Activated T-helper 1 cell treated with anti-CD3 and anti-CD28 coated beads, Interleukin-12 subunit alpha, Interleukin-12 subunit beta, Interleukin-2, Interleukin-4 antibody, amounts not matched to agents 30 ng/mL and 10 ng/mL and 1 ng/mL, durations not matched to agents 14 hours and 24 hours and 36 hours (primary cell): ENCODE measurements at regions of chr11 and their contacts with region 1.

Region 1: GRCh38 chr11:118845369-118845768 is 38.3 kb upstream of the CXCR5 start:
- DNase-seq: no peak
- H3K4me3 Mint-ChIP-seq: no peak overlapping the region
- H3K27ac Mint-ChIP-seq: peak overlapping the region; percentile 80
- H3K4me1 Mint-ChIP-seq: peaks cover 27% of the 10 kb centered on the region
- H3K27me3 Mint-ChIP-seq: peaks cover 5% of the 10 kb centered on the region

Region 2: DNA sequence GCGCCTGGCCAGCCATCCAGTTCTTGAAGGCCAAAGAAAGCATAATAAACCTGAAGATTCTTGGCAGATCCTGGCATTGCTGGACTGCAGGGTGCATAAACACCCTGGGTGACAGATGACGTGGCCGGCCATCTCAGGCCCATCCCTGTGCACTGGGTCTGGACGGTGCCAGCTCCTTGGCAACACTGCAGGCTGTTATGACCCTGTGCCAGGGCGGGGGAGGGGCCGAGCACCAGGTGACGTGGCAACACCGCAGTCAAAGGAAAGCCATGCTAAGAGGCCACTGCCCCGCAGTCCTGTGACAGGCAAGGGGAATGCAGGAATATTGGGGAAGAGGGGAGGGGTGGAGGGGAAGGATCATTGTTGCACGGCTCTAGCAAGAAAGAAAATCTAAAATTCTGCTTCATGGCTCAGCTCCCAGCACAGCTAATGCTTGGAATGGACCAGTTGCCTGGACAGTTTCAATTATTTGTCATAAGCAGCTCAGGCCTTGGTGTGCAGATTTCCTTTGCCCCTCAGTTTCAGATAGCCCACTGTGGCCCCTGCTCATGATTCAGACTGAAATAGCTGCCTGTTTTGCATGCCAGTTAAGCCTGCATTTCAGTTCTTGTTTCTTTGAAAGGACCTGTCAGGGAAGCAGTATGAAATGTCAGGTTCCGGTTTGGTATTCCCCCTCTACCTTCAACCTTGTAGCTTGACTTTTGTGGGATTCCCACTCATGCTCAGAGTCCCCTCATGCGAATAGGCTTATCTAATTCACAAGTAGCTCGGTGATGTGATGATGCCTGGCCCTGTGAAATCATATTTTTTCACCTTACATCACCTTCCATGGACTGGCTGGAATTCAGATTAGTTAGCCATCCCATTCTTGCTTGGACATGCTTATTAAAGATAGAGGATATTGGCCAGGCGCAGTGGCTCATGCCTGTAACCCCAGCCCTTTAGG is 24.7 kb before region 1 on chr11:
- intact Hi-C with region 1: loop called (anchors 2 kb)
- DNase-seq: no peak
- H3K4me3 Mint-ChIP-seq: no peak overlapping the region
- H3K27ac Mint-ChIP-seq: no peak overlapping the region
- H3K4me1 Mint-ChIP-seq: peaks cover 6% of the 10 kb centered on the region
- H3K27me3 Mint-ChIP-seq: no peaks in the 10 kb centered on the region

Region 3: DNA sequence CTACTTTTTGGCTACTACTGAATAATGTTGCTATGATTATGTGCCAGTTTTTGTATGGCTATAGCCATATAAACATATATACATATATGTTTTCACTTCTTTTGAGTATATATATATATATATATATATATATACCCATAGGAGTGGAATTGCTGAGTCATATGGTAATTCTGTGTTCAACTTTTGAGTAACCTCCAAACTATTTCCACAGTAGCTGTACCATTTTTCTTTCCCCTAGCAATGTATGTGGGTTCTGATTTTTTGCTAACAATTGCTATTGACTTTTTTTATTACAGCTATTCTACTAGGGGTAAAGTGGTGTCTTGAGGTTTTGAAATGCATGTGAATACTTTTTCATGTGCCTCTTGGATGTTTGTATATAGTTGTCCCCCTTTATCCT is 391.1 kb after region 1 on chr11:
- intact Hi-C with region 1: loop called (anchors 10 kb)
- DNase-seq: no peak
- H3K4me3 Mint-ChIP-seq: no peak overlapping the region
- H3K27ac Mint-ChIP-seq: peak overlapping the region; percentile 84
- H3K4me1 Mint-ChIP-seq: peaks cover 46% of the 10 kb centered on the region
- H3K27me3 Mint-ChIP-seq: no peaks in the 10 kb centered on the region